ENCODE measurements at regions of chr14 and their contacts with region 1.

Region 1: DNA sequence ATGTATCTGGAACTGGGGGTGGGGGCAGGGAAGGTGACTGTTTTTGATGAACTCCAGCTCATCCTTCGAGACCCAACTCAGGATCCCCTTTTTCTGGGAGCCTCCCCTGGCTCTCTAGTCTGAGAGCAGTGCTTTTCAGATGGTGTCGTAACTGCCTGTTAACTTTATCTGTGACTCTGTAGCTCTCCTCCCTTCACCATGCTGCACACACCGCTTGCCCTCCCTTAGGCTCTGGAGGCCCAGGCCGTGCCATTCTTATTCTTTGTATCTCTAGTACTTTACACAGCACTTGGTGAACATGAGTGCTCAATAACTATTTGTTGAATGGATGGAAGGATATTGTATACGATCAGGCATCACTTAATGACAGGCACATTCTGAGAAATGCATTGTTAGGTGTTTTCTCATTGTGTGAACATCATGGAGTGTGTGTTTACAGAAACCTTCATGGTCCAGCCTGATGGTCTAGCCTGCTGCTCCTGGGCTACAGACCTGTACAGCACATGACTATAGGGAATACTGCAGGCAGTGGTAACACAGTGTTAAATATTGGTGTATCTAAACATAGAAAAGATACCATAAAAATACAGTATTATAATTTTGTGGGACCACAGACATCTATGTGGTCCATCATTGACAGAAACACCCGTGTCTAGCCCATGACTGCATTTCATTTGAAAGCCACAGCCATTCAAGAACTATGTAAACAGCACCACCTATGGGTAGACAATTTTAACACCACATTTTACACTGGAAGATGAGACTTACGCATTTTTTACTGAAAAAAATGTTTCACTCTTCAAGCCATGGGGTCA is 91.8 kb downstream of the EML1 start:
- DNase-seq: peak in 2 of 10 donors; percentile 27 to 48
- H3K4me3 ChIP-seq: no peak overlapping the region
- H3K27ac ChIP-seq: peak overlapping the region in 5 of 59 donors; percentile 10 to 62 (median 21)
- H3K27me3 ChIP-seq: no peaks in the 10 kb centered on the region
- CTCF ChIP-seq: peak; percentile 74 to 98 (median 88)

Region 2: GRCh38 chr14:99518441-99519346 is 366.3 kb before region 1 on chr14:
- intact Hi-C with region 1: loop called in 1 of 2 experiments (anchors 5 kb)
- DNase-seq: peak; percentile 51 to 85 (median 71)
- H3K4me3 ChIP-seq: no peak overlapping the region
- H3K27ac ChIP-seq: peak overlapping the region in 2 of 59 donors; percentile 31 to 45
- H3K27me3 ChIP-seq: no peaks in the 10 kb centered on the region
- CTCF ChIP-seq: peak; percentile 86 to 100 (median 98)

Region 3: DNA sequence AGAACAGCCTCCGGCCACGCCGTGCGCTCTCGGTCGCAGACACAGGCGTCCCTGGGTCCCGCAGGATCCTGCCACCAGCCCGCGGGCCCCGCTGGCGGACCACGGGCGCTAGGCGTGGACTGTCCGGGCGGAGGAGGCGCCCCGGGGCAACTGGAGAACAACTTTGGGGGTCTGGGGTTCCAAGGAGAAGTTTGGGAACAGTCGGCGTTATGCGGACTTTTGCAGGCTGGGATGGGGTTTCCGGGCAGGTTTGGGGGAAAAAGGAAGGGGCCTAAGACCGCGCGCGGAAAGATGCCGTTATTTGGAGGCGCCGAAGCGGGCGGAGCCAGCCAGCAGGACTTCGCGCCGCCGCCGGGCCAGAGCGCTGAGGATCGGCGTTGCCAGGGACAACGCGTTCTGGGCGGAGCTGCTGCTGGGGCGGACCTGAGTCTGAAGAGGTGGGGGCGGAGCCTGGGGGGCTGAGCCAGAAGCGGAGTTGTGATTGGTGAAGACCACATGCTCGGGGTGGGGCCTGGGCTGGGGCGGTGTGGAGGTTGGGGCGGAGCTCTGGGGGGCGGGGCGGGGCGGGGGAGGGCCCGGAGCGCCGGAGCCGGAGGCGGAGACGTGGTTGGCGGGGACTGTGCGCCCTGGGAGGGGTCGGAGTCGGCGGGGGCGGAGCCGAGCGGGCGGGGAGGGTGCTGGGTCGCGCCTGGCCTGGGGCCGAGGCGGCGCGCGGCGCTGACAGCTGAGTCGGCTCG is 201.3 kb before region 1 on chr14 and contains the start of gene CYP46A1:
- intact Hi-C with region 1: loop called (anchors 1 to 5 kb)
- DNase-seq: peak; percentile 99 to 100 (median 100)
- H3K4me3 ChIP-seq: peak within 1 kb of the TSS; percentile 74 to 97 (median 91)
- H3K27ac ChIP-seq: peak within 1 kb of the TSS in 55 of 59 donors; percentile 13 to 92 (median 81)
- H3K27me3 ChIP-seq: no peaks in the 10 kb centered on the region
- CTCF ChIP-seq: peak in 22 of 56 donors; percentile 1 to 30 (median 16)
- total RNA-seq, gene CYP46A1: 26.0 to 165 (median 81.5) TPM

Region 4: DNA sequence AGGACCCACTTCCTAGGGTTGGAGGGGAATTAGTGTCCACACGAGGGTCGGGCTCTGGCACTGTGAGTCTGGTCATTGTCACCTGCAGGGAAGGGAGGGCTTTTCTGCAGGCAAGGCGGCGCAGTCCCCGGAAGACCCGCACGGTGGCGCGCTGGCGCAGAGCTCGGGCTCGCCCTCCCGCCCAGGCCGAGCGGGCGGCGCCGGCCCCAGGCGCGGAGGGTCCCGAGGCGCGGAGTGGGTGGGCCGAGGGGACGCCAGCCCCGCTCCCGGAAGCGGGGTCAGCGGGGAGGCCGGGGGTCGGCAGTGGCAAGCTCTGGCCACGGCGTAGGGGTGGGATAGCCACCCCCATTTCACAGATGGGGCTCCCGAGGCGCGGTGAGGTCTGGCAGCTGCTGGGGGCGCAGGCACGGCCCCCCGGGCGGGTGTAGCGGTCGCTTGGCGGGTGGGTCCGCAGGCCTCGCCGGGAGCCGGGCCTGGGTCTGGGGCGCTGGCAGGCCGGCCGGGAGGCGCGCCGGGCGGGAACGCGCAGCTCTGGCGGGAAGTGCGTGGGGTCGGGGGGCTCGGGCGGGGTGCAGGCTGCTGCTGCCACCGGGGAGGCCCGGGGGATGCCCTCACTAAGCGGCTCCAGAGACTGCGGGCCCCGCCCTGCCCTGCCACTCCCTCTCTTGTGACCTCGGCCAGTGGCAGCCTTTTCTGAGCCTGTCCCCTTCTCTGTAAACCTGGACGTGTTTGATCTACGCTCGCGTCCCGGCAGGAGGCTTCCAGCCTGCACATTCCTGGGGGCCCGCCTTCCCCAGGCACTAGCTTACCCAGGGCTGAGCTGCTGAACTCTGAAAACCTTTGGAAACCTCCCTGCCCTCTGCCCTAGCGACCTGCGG is 154.8 kb before region 1 on chr14:
- intact Hi-C with region 1: loop called (anchors 1 to 2 kb)
- DNase-seq: peak; percentile 51 to 82 (median 70)
- H3K4me3 ChIP-seq: peak overlapping the region; percentile 34 to 84 (median 67)
- H3K27ac ChIP-seq: peak overlapping the region in 20 of 59 donors; percentile 1 to 88 (median 42)
- H3K27me3 ChIP-seq: no peaks in the 10 kb centered on the region
- CTCF ChIP-seq: peak; percentile 54 to 99 (median 90)

Region 5: DNA sequence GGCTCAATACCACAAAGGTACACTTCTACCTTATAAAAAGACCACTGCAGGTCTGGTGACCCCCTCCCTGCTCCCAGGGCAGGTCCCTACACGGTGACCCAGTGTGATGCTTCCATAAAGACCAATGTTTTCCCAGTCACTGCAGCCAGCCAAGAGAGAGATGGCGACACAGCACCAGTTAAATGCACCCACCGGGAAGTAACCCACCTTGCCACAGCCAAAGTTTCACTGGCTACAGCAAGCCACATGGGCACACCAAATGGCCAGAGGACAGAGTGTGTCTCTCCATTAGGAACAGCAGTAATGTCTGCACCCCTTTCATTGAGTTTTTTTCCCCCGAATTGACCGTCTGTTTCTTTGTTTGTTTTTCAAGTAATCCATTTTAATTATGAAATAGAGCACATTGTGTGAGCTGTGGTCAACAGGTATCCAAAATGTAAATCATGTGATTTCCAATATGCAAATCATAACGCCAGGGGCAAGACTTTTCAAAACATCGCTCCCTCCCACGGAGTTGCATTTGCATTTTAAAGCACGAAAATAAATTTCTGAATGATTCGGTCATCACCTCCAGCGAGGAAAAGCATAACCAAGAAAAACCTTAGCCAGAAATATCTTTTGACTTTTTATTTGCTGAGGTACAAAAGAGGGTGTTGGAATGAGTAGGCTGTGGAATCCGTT is 140.7 kb before region 1 on chr14:
- intact Hi-C with region 1: no loop called
- DNase-seq: no peak
- H3K4me3 ChIP-seq: no peak overlapping the region
- H3K27ac ChIP-seq: no peak overlapping the region
- H3K27me3 ChIP-seq: no peaks in the 10 kb centered on the region
- CTCF ChIP-seq: no peak

Region 6: DNA sequence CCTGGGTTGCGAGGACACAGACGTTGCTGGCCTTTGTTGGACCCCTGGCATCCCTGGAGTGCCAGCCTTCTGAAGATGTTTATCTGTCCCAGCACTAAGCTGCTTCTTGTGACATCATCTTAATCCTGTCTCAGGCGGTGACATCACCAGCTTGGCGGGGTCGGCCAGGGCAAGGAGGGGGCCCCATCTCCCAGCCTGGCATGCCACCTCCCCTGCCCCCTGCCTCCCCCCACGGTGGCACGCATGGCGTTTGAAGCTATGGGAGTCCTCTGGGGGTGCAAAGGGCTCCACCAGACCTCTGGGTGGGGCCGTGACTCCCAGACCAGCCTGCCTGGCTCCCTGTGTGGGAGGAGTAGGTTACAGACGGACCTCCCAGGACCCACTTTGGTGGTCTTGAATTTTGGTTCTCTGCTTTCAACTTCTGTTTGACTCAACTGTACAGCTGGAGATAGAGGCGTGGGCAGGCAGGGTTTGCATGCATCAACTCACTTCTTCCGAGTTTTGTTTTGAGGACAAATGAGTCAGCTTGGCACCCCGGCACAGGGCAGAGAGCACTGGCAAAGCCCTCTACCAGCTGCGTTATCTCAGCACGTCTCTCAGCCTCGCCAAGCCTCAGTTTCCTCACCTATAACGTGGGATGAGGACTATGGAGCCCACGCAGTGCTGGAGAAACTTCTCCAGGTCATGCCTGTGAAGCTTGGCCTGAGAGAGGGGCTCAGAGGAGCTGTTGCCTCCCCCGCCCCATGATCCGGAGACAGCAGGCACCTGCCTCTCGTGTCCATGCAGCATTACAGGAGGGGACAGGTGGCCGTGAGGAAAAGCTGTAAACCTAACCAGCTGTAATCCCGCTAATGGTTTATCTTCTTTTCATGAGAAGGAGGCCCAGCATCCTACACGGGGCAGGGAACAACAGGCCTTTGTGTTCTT is 130.6 kb before region 1 on chr14:
- intact Hi-C with region 1: no loop called
- DNase-seq: peak in 4 of 10 donors; percentile 39 to 49 (median 44)
- H3K4me3 ChIP-seq: no peak overlapping the region
- H3K27ac ChIP-seq: peak overlapping the region in 9 of 59 donors; percentile 4 to 64 (median 23)
- H3K27me3 ChIP-seq: no peaks in the 10 kb centered on the region
- CTCF ChIP-seq: no peak

Region 7: DNA sequence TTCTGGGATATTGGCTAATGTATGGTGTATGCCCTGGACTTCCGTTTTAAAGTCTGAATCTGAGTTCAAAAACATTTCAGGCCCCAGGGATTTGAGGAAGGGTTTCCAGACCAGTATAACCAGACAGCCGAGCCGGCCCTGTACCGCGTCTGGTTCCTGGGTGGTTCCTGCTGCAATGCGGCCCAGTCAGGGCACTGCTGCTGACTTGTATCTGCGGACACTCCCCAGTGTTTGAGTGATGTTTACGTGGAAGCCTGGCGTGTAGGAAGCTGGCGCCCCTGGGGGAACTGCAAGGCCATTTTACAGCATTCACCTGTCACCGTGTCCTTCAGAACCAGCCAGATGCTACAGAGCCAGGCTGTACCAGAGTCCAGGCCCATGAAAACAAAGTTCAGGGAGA is 75.2 kb before region 1 on chr14:
- intact Hi-C with region 1: loop called in 1 of 2 experiments (anchors 5 kb)
- DNase-seq: no peak
- H3K4me3 ChIP-seq: peak overlapping the region in 1 of 59 donors; percentile 16
- H3K27ac ChIP-seq: peak overlapping the region in 39 of 59 donors; percentile 2 to 89 (median 45)
- H3K27me3 ChIP-seq: no peaks in the 10 kb centered on the region
- CTCF ChIP-seq: no peak

Measured in dorsolateral prefrontal cortex (tissue), 120 donors.